Left lung (tissue), 14 donors: ENCODE measurements at regions of chr10 and their contacts with region 1.

Region 1: DNA sequence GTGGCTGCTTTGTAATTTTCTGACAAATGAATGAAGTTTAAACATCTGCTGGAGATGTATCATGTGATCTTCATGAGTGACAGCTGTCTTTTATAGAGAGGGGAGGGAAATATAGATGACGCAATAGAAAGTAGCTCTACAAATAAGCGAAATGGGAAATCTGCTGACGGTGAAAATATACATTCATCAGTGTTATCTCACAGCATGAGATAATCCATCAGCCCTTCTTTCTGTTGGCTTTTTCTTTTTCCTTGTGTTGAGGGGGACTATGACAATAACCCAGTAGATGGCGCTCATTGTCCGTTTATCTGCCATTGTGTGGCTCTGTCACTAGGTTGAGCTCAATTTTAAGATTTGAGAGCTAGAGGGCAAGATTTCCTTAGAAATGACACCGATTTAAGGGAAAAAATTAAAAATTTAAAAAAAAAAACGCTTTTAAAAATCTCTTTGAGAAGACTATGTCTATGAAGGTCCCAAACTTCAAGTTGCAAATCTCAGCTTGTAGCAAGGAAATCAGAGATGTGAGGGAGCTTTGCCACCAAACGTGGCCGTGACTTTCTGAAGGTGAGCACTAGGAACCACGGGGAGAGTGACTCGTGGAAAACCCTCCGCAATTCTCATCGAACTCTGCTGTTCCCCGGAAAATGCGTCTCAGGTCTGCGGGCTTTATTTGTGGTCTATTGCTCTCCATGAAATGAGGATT is 114.6 kb upstream of the SFMBT2 start:
- DNase-seq: peak in 2 of 4 donors; percentile 77 to 86
- ATAC-seq: peak; percentile 95
- H3K4me3 ChIP-seq: no peak overlapping the region
- H3K27ac ChIP-seq: no peak overlapping the region
- H3K4me1 ChIP-seq: peaks cover 0 to 4% of the 10 kb centered on the region in 2 donors
- H3K27me3 ChIP-seq: peaks cover 0 to 43% of the 10 kb centered on the region in 2 donors
- CTCF ChIP-seq: peak; percentile 74 to 75

Region 2: DNA sequence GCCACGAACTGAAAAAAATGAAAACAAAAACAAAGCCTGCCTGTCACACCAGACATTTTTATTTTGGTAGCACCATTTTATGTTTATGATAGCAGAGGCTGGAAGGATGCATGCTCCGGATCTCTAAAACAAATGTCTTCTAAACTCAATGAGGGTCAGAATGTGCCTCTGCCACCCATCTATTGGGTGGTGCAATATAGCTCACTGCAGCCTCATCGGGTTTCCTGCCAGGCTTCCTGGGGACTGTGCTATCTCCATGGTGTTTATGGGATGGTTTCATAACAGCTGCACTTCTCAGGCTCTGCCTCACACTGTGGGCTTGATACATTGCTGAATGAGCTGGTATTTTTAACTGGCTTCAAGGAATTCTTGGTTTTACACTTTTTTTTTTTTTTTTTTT is 46.9 kb after region 1 on chr10:
- intact Hi-C with region 1: no loop called
- DNase-seq: peak in 2 of 4 donors; percentile 59 to 75
- ATAC-seq: peak; percentile 70
- H3K4me3 ChIP-seq: no peak overlapping the region
- H3K27ac ChIP-seq: peak overlapping the region in 1 of 2 donors; percentile 45
- H3K4me1 ChIP-seq: peaks cover 0 to 5% of the 10 kb centered on the region in 2 donors
- H3K27me3 ChIP-seq: no peaks in the 10 kb centered on the region
- CTCF ChIP-seq: no peak

Region 3: DNA sequence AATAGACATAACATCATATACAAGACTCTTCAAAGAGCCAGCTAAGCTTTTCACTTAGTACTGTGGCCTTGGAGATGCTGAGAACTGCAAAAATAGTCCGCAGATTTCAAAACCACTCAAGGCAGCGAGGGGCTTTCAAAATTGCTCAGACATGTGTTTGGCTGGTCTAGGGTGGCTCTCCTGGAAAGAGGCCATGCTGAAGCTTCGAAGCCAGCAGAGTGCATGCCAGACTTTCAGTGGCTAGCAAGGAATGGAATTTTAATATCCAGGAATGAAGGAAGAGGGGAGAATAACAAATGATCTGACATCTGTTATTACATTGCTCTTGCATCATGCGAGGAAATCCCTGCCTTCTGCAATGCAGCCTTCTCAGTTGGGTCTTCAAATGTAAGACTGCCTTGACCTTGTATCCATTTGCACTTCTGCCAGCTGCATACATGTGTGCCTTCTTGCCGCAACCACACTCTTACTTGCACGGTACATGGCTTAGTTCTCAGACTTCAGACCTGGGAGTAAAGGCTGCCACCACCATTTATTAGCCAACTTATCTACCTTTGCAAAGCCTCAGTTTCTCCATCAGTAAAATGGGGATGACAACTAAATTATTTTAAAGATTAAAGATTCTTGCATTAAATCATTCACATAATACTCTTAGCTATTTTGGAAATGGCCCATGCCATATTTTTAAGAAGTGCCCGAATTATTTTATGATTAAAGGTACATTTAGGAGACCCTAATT is 85.4 kb after region 1 on chr10:
- intact Hi-C with region 1: no loop called
- DNase-seq: peak in 3 of 4 donors; percentile 38 to 91 (median 87)
- ATAC-seq: peak; percentile 76
- H3K4me3 ChIP-seq: no peak overlapping the region
- H3K27ac ChIP-seq: no peak overlapping the region
- H3K4me1 ChIP-seq: no peaks in the 10 kb centered on the region
- H3K27me3 ChIP-seq: no peaks in the 10 kb centered on the region
- CTCF ChIP-seq: no peak

Region 4: DNA sequence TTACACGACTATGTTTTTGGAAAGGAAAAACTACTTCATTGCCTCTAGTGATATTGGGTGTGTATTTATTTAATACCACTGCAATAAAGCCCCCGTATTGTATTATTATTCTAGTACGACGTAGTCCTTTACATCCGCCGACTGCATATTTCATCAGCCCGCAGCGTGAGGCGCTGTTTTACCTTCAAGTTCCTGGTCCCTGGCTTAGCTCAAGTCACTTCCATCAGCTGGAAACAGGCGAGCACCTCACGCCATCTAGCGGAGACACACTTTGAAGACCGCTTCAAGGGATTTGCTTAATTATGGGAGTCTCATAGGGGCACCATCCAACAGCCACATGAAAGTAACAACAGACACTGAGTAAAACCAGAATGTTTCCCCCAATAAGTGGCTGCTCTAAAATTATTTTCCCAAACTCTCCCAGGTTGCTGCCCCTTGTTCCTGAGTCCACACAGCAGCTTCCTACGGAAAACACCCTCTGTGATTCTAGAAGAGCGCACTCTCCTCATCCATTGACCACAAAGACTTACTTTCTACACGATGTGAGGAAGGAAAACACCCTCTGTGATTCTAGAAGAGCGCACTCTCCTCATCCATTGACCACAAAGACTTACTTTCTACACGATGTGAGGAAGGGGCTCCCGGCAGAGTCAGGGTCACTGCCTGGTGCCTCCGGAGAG is 161.9 kb after region 1 on chr10:
- intact Hi-C with region 1: loop called (anchors 5 to 10 kb)
- DNase-seq: peak; percentile 79 to 93 (median 82)
- ATAC-seq: peak; percentile 97
- H3K4me3 ChIP-seq: no peak overlapping the region
- H3K27ac ChIP-seq: no peak overlapping the region
- H3K4me1 ChIP-seq: peaks cover 0 to 3% of the 10 kb centered on the region in 2 donors
- H3K27me3 ChIP-seq: no peaks in the 10 kb centered on the region
- CTCF ChIP-seq: peak; percentile 75 to 80